ENCODE measurements at regions of chr15 and their contacts with region 1.

Region 1: GRCh38 chr15:79394231-79394630 is 37.9 kb upstream of the MINAR1 start:
- DNase-seq: no peak
- H3K4me3 ChIP-seq: no peak overlapping the region
- H3K27ac ChIP-seq: no peak overlapping the region
- H3K4me1 ChIP-seq: peaks cover 7% of the 10 kb centered on the region
- H3K27me3 ChIP-seq: no peaks in the 10 kb centered on the region
- CTCF ChIP-seq: no peak
- POLR2A ChIP-seq: no peak

Region 2: GRCh38 chr15:78778422-78778821 is 615.8 kb before region 1 on chr15:
- intact Hi-C with region 1: loop called (anchors 5 kb)
- DNase-seq: no peak
- H3K4me3 ChIP-seq: no peak overlapping the region
- H3K27ac ChIP-seq: no peak overlapping the region
- H3K4me1 ChIP-seq: no peaks in the 10 kb centered on the region
- H3K27me3 ChIP-seq: no peaks in the 10 kb centered on the region
- CTCF ChIP-seq: no peak
- POLR2A ChIP-seq: no peak

Region 3: GRCh38 chr15:79849784-79850183 is 455.6 kb after region 1 on chr15:
- intact Hi-C with region 1: loop called (anchors 10 kb)
- DNase-seq: no peak
- H3K4me3 ChIP-seq: no peak overlapping the region
- H3K27ac ChIP-seq: no peak overlapping the region
- H3K4me1 ChIP-seq: no peaks in the 10 kb centered on the region
- H3K27me3 ChIP-seq: no peaks in the 10 kb centered on the region
- CTCF ChIP-seq: no peak
- POLR2A ChIP-seq: no peak

Measured in vagina (tissue), 2 donors.